Activated T-helper 2 cell treated with anti-CD3 and anti-CD28 coated beads, Interferon-gamma antibody, Interleukin-2, Interleukin-4, amounts not matched to agents 10 μg/mL and 5 μg/mL and 100 μg/mL, durations not matched to agents 14 hours and 24 hours and 36 hours (primary cell): ENCODE measurements at regions of chr13 and their contacts with region 1.

Region 1: DNA sequence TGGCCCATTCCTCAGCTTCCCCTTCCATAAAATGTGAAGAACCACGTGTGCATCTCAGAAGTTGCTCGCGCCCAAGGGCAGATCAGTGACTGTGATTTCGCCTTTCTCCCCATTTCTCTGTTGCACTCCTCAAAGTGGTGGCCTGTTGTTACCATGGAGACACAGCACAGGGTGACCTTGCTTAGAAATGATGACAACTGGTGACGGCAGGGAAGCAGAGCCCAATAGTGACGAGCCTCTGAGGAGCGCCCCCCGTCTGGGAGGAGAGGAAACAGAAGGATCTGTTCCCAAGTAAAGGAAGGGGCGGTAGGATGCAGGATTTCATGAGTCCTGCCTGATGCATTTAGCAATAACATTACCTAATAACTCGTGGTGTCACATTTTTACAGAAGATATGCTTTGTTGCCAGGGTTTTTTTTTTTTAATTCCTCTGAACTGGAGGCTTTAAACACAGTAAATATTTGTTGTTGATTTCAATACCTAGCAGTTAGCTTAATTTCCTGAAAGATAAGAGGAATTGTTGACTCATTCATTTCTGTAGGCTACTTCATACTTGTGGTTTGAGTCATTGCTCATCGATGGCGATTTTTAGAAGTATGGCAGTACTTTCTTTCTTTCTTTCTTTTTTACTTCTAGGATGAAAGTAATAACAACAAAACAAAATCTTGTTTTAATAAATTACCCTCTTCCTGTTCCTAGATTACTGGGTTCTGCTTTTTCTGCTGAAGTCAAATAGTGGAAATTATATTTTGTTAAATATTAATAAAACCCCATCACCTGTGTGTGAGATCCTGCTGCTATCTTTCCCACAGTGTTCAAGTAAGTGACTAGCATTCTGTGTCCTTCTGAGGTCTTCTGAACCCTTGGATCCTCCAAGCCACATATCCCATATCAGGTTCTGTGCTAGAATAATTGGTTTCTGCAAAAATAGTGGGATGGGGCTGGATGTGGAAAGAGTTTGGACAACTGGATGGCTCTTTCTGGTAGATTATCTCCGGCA is 36.0 kb downstream of the MBNL2 start:
- DNase-seq: no peak
- H3K4me3 Mint-ChIP-seq: peak overlapping the region; percentile 41
- H3K27ac Mint-ChIP-seq: peak overlapping the region; percentile 93
- H3K4me1 Mint-ChIP-seq: peaks cover 80% of the 10 kb centered on the region
- H3K27me3 Mint-ChIP-seq: no peaks in the 10 kb centered on the region

Region 2: GRCh38 chr13:97100821-97101220 is 157.3 kb before region 1 on chr13:
- intact Hi-C with region 1: loop called (anchors 1 kb)
- DNase-seq: no peak
- H3K4me3 Mint-ChIP-seq: no peak overlapping the region
- H3K27ac Mint-ChIP-seq: no peak overlapping the region
- H3K4me1 Mint-ChIP-seq: peaks cover 20% of the 10 kb centered on the region
- H3K27me3 Mint-ChIP-seq: peaks cover 6% of the 10 kb centered on the region

Region 3: DNA sequence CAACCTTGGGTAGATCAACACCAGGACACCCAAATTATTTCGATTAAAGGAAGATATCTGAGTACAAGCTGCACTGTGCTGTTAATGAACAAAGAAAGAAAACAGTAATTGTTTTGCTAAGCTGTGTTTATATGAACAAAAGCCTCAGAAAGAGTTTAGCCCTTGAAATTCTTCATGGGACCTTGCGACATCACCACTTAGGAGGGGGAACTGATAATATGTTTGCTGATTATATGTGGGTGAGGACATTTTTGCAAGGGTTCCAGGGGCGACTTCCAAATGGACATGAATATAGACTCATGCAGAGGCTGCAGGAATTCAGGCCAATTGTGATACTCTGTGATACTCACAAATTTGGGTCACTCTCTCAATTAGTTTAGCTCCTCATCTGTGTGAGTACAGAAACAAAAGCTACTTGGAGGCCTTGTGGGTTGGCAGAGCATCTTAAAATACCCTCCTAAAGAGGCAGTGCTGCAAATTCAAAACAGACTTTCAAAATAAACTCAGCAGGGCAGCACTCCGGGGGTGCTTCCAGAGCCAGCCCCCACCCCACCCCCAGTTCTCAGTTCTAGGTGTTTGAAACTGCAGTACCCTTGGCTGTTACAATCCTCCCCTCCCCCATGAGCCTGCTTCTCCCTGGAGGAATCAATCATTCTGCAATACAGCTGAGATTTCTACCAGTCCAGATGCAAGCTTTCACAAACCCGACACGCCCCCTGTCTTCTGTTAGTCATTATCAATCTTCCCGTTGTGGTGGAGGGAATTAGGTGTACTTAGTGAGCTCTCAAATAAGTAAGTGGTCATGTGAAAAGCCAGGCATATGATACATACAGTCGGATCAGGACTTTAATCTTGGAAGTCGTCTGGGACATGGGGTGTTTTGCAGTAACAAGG is 132.9 kb before region 1 on chr13:
- intact Hi-C with region 1: loop called (anchors 1 kb)
- DNase-seq: no peak
- H3K4me3 Mint-ChIP-seq: no peak overlapping the region
- H3K27ac Mint-ChIP-seq: peak overlapping the region; percentile 47
- H3K4me1 Mint-ChIP-seq: peaks cover 27% of the 10 kb centered on the region
- H3K27me3 Mint-ChIP-seq: peaks cover 35% of the 10 kb centered on the region

Region 4: DNA sequence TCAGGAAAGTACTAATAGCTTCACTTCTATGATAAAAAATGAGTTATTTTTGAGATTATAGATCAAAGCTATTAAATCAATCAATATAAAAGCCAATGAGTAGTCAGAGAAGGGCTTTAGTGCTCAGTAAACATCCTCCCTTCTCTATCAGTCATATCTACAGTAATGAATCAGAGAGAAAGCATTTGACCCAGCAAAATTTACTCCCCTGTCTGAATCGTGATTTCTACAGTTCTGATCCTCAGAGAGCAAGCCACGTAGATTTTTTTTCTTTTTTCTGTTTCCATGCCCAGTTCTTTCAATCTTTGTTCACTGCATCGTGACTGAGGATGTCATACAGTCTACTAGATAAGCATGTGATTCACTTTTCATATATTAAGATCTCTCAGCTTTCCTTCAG is 52.1 kb before region 1 on chr13:
- intact Hi-C with region 1: loop called (anchors 1 kb)
- DNase-seq: no peak
- H3K4me3 Mint-ChIP-seq: no peak overlapping the region
- H3K27ac Mint-ChIP-seq: no peak overlapping the region
- H3K4me1 Mint-ChIP-seq: peaks cover 22% of the 10 kb centered on the region
- H3K27me3 Mint-ChIP-seq: peaks cover 10% of the 10 kb centered on the region

Region 5: DNA sequence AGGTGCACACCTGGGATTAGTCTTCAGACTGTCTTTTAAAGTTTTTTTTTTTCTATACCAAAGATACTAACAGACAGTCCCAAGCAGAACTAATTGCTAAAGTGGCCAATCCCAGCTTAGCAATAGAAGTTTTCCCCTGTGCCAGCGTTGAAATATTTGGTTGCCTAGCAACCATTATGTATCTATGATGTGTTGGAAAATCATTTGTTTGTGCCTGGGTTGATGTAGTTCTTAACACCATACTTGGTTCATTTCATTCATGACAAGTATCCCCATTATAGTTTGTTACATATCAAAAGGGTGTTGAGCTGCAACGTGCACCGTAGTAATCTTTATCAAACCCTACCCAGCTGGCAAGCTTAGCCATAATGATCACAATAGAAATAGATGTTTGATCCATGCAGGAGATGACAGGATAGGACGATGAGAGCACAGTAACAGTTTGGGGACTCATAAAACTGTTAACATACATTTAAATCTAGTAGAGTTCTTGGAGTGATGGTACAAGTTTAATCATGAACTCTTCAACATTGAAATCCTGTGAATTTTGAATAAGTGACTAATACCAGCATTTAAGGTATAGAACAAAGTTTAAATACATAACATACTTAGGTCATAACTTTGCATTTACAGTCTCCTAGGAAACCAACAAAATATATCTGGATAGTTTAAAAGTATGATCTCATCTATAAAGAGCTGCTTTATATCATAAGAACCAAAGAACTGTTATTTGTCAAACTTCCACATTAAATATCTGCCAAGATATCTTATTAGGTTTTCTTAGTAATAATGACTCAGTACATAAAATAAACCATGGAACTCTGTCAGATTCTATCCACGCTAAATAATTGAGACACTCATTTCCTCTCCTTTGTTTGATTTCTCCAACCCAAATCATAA is 37.4 kb after region 1 on chr13:
- intact Hi-C with region 1: loop called (anchors 1 kb)
- DNase-seq: no peak
- H3K4me3 Mint-ChIP-seq: no peak overlapping the region
- H3K27ac Mint-ChIP-seq: no peak overlapping the region
- H3K4me1 Mint-ChIP-seq: peaks cover 22% of the 10 kb centered on the region
- H3K27me3 Mint-ChIP-seq: no peaks in the 10 kb centered on the region